Activated T-helper 1 cell treated with anti-CD3 and anti-CD28 coated beads, Interleukin-12 subunit alpha, Interleukin-12 subunit beta, Interleukin-2, Interleukin-4 antibody, amounts not matched to agents 30 ng/mL and 10 ng/mL and 1 ng/mL, durations not matched to agents 14 hours and 24 hours and 36 hours (primary cell): ENCODE measurements at regions of chr12 and their contacts with region 1.

Region 1: GRCh38 chr12:668090-668481 is 4.8 kb upstream of the NINJ2 start:
- DNase-seq: no peak
- H3K4me3 Mint-ChIP-seq: no peak overlapping the region
- H3K27ac Mint-ChIP-seq: peak overlapping the region; percentile 67
- H3K4me1 Mint-ChIP-seq: peaks cover 79% of the 10 kb centered on the region
- H3K27me3 Mint-ChIP-seq: no peaks in the 10 kb centered on the region

Region 2: GRCh38 chr12:575948-576612 is 92.0 kb before region 1 on chr12:
- intact Hi-C with region 1: loop called (anchors 1 kb)
- DNase-seq: peak; percentile 81
- H3K4me3 Mint-ChIP-seq: no peak overlapping the region
- H3K27ac Mint-ChIP-seq: peak overlapping the region; percentile 80
- H3K4me1 Mint-ChIP-seq: peaks cover 33% of the 10 kb centered on the region
- H3K27me3 Mint-ChIP-seq: peaks cover 4% of the 10 kb centered on the region

Region 3: DNA sequence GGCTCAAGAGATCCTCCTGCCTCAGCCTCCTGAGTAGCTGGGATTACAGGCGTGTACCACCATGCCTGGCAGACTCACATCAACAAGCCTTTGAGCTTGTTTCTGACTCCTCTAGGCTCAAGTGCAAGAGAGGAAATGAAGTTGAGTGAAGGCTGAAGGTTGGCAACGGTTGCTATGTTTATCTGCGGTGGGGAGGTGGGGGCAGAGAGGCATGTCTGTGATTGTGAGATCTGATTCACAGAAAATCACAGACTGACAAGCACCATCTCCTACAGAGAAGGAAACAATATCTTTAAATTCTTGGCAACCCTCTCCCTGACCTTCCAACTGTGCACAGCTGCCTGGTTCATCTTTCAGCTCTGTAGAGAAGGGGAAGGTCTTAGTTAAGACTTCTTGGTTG is 17.3 kb after region 1 on chr12:
- intact Hi-C with region 1: loop called (anchors 1 kb)
- DNase-seq: peak; percentile 79
- H3K4me3 Mint-ChIP-seq: peak overlapping the region; percentile 15
- H3K27ac Mint-ChIP-seq: peak overlapping the region; percentile 90
- H3K4me1 Mint-ChIP-seq: peaks cover 37% of the 10 kb centered on the region
- H3K27me3 Mint-ChIP-seq: no peaks in the 10 kb centered on the region

Region 4: DNA sequence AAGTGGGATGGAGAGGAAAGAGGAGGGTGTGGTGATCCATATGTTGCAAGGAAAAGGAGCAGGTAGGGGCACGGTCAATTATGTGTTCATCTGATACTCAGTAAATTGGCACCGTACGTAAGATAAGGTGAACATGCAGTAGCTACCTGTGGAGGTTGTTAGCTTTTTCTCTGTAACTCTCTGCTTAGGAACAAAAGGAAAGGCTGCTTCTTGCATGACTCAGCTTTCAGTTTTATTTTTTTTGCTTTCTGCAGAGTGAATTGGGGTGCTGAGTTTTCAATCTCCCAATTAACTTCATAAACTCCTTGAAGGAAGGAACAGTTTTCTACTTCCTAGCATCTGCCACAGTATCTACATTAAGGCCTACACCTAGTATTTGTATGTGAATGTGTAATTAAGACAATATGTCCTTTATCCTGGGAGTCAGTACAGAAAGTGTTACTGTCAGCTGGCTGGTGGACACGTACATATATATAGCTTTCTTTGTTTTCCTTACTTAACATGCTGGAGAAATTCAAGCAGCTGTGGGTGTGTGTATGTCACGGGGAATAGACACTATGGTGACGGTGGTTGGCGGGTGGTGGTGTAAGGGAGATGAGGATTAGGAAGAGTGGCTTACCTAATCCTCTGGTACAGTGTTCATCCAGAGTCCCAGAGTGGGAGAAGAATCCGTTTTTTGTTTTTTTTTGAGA is 44.2 kb after region 1 on chr12:
- intact Hi-C with region 1: loop called (anchors 1 kb)
- DNase-seq: no peak
- H3K4me3 Mint-ChIP-seq: no peak overlapping the region
- H3K27ac Mint-ChIP-seq: peak overlapping the region; percentile 72
- H3K4me1 Mint-ChIP-seq: peaks cover 37% of the 10 kb centered on the region
- H3K27me3 Mint-ChIP-seq: no peaks in the 10 kb centered on the region

Region 5: DNA sequence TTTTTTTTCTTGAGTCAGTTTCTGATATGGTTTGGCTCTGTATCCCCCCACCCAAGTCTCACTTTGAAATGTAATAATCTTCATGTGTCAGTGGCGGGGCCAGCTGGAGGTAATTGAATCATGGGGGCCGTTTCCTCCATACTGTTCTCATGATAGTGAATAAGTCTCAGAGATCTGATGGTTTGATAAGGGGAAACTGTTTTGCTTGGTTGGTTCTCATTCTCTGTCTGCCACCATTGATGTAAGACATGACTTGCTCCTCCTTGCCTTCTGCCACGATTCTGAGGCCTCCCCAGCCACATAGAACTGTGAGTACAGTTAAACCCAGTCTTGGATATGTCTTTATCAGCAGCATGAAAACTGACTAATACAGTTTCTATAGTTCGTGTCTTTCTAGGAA is 127.2 kb after region 1 on chr12:
- intact Hi-C with region 1: loop called (anchors 1 kb)
- DNase-seq: no peak
- H3K4me3 Mint-ChIP-seq: peak overlapping the region; percentile 6
- H3K27ac Mint-ChIP-seq: peak overlapping the region; percentile 87
- H3K4me1 Mint-ChIP-seq: peaks cover 64% of the 10 kb centered on the region
- H3K27me3 Mint-ChIP-seq: no peaks in the 10 kb centered on the region

Region 6: GRCh38 chr12:828726-829395 is 160.8 kb after region 1 on chr12:
- intact Hi-C with region 1: no loop called
- DNase-seq: no peak
- H3K4me3 Mint-ChIP-seq: no peak overlapping the region
- H3K27ac Mint-ChIP-seq: no peak overlapping the region
- H3K4me1 Mint-ChIP-seq: peaks cover 25% of the 10 kb centered on the region
- H3K27me3 Mint-ChIP-seq: no peaks in the 10 kb centered on the region

Region 7: GRCh38 chr12:848173-848865 is 180.2 kb after region 1 on chr12:
- intact Hi-C with region 1: loop called (anchors 2 kb)
- DNase-seq: no peak
- H3K4me3 Mint-ChIP-seq: peak overlapping the region; percentile 13
- H3K27ac Mint-ChIP-seq: peak overlapping the region; percentile 81
- H3K4me1 Mint-ChIP-seq: peaks cover 52% of the 10 kb centered on the region
- H3K27me3 Mint-ChIP-seq: no peaks in the 10 kb centered on the region